ENCODE measurements at regions of chr6 and their contacts with region 1.

Region 1: GRCh38 chr6:131914967-131915751 is 36.0 kb downstream of the CCN2 start:
- DNase-seq: peak; percentile 84
- H3K4me3 Mint-ChIP-seq: no peak overlapping the region
- H3K27ac Mint-ChIP-seq: no peak overlapping the region
- H3K4me1 Mint-ChIP-seq: no peaks in the 10 kb centered on the region
- H3K27me3 Mint-ChIP-seq: peaks cover 27% of the 10 kb centered on the region
- CTCF ChIP-seq: peak; percentile 62

Region 2: DNA sequence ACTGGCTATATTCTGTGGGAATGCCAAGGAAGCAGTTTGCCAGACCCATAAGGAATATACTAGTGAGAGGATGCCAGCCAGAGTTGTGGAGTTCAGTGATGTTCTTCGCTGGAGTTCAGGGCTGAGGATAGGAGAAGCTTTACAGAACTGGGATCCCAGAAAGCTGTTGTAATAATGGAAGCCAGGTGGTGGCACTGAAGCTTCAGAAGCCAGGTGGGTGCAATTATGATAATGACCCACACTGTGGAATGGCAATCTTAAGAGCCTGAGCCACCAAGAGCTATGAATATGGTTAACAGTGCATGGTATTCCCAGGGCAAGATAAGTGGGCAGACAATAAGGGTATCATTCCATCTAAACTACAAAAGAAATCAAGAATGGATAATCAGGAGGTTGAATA is 132.4 kb before region 1 on chr6:
- CTCF ChIA-PET with region 1: interaction called, 33 read pairs
- POLR2A ChIA-PET with region 1: no interaction called
- intact Hi-C with region 1: loop called (anchors 1 kb)
- DNase-seq: peak; percentile 23
- H3K4me3 Mint-ChIP-seq: no peak overlapping the region
- H3K27ac Mint-ChIP-seq: no peak overlapping the region
- H3K4me1 Mint-ChIP-seq: no peaks in the 10 kb centered on the region
- H3K27me3 Mint-ChIP-seq: no peaks in the 10 kb centered on the region
- CTCF ChIP-seq: no peak

Region 3: DNA sequence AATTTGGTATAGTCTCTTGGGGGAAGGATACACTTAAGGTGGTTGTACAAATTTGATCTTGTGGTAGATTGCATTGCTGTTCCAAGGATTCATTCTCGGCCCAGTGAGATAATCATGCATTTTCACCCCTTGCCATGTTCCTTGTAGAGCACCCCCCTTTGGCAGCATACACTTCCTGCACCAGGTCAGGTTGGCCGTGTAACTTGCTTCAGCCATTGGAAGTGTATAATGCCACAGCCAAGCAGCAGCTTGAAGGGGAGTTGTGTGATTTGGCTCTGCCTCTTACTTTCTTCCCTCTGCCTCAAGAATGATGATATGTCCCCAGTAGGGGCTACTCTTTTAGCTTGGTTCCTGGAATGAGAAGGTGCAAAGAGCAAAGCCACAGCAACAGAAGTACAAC is 14.1 kb after region 1 on chr6:
- CTCF ChIA-PET with region 1: interaction called, 64 read pairs
- POLR2A ChIA-PET with region 1: interaction called, 3 read pairs
- intact Hi-C with region 1: no loop called
- DNase-seq: no peak
- H3K4me3 Mint-ChIP-seq: no peak overlapping the region
- H3K27ac Mint-ChIP-seq: no peak overlapping the region
- H3K4me1 Mint-ChIP-seq: peaks cover 6% of the 10 kb centered on the region
- H3K27me3 Mint-ChIP-seq: no peaks in the 10 kb centered on the region
- CTCF ChIP-seq: no peak

Region 4: DNA sequence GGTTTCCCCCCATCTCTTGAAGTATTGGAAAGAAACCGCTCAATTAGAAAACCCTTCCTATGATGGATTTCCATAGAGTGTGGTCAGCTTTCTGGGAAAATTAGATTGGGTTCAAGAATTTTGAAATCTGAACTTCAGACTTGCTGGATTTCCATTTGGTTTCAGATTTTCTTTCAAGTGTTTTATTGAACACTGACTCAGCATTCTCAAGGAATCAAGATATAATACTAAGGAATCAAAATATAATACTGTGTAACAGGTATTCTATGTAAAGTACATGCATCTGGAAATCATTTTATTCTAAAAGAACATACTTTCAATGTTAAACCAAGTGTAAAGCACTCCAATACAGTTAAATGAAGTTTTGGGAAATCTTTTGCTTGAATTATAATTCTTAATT is 130.7 kb after region 1 on chr6:
- CTCF ChIA-PET with region 1: no interaction called
- POLR2A ChIA-PET with region 1: no interaction called
- intact Hi-C with region 1: no loop called
- DNase-seq: no peak
- H3K4me3 Mint-ChIP-seq: no peak overlapping the region
- H3K27ac Mint-ChIP-seq: no peak overlapping the region
- H3K4me1 Mint-ChIP-seq: peaks cover 5% of the 10 kb centered on the region
- H3K27me3 Mint-ChIP-seq: no peaks in the 10 kb centered on the region
- CTCF ChIP-seq: no peak

Region 5: DNA sequence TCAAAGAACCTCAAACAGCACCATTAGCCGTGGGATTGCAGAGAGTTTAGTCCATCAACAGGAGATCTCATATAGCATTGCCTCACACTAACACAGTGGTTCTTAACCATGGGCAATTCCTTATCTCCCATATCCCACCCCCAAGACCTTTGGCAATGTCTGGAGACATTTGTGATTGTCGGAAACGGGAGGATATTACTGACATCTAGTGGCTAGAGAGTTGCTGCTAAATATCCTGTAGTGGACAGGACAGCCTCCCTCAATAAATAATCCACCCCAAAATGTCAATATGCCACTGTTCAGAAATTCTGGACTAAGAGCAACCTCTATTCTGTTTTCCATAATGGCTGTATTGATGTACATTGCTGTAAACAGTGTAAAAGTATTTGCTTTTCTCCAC is 246.1 kb after region 1 on chr6:
- CTCF ChIA-PET with region 1: interaction called, 17 read pairs
- POLR2A ChIA-PET with region 1: no interaction called
- intact Hi-C with region 1: no loop called
- DNase-seq: peak; percentile 51
- H3K4me3 Mint-ChIP-seq: no peak overlapping the region
- H3K27ac Mint-ChIP-seq: no peak overlapping the region
- H3K4me1 Mint-ChIP-seq: no peaks in the 10 kb centered on the region
- H3K27me3 Mint-ChIP-seq: no peaks in the 10 kb centered on the region
- CTCF ChIP-seq: peak; percentile 57

Region 6: GRCh38 chr6:132259070-132259469 is 343.9 kb after region 1 on chr6:
- CTCF ChIA-PET with region 1: interaction called, 32 read pairs
- POLR2A ChIA-PET with region 1: no interaction called
- intact Hi-C with region 1: loop called (anchors 2 kb)
- DNase-seq: peak; percentile 30
- H3K4me3 Mint-ChIP-seq: no peak overlapping the region
- H3K27ac Mint-ChIP-seq: no peak overlapping the region
- H3K4me1 Mint-ChIP-seq: peaks cover 10% of the 10 kb centered on the region
- H3K27me3 Mint-ChIP-seq: no peaks in the 10 kb centered on the region
- CTCF ChIP-seq: peak; percentile 28

Region 7: GRCh38 chr6:132300323-132300949 is 385.3 kb after region 1 on chr6:
- CTCF ChIA-PET with region 1: interaction called, 19 read pairs
- POLR2A ChIA-PET with region 1: no interaction called
- intact Hi-C with region 1: loop called (anchors 1 kb)
- DNase-seq: peak; percentile 70
- H3K4me3 Mint-ChIP-seq: no peak overlapping the region
- H3K27ac Mint-ChIP-seq: no peak overlapping the region
- H3K4me1 Mint-ChIP-seq: no peaks in the 10 kb centered on the region
- H3K27me3 Mint-ChIP-seq: no peaks in the 10 kb centered on the region
- CTCF ChIP-seq: peak; percentile 74

Measured in MCF 10A (cell line).